H1 (cell line): ENCODE measurements at regions of chr9 and their contacts with region 1.

Region 1: GRCh38 chr9:94097788-94098414 is 13.6 kb downstream of the PTPDC1 start:
- DNase-seq: no peak
- H3K4me3 ChIP-seq: no peak overlapping the region
- H3K27ac ChIP-seq: no peak overlapping the region
- H3K4me1 ChIP-seq: peaks cover 0 to 5% (median under 1%) of the 10 kb centered on the region in 4 experiments; a peak in 2 of 7 replicates
- H3K27me3 ChIP-seq: no peaks in the 10 kb centered on the region
- CTCF ChIP-seq: no peak
- EP300 ChIP-seq: no peak
- POLR2A ChIP-seq: no peak
- RAD21 ChIP-seq: no peak

Region 2: DNA sequence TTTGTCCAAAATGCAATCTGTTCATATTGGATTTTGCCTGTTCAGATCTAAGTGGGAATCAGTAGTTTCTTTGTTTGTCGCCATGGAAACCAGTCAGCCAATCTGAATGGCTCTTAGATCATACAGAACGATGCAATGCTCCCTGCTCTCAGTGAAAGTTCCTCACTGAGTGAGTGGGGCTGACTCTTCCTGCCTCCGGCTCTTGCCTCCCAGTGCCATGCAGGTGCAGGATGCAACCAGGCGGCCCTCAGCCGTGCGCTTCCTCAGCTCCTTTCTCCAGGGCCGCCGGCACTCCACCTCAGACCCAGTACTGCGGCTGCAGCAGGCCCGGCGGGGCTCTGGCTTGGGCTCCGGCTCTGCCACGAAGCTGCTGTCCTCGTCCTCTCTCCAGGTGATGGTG is 13.6 kb before region 1 on chr9 and contains the start of gene PTPDC1:
- CTCF ChIA-PET with region 1: interaction called, 7 read pairs
- POLR2A ChIA-PET with region 1: interaction called, 16 read pairs
- DNase-seq: peak; percentile 47 to 77
- H3K4me3 ChIP-seq: peak within 1 kb of the TSS in 1 of 4 experiments; percentile 48; a peak in 2 of 8 replicates
- H3K27ac ChIP-seq: no peak within 1 kb of the TSS
- H3K4me1 ChIP-seq: peaks cover 0 to 5% (median 1%) of the 10 kb centered on the region in 4 experiments; a peak in 2 of 7 replicates
- H3K27me3 ChIP-seq: no peaks in the 10 kb centered on the region
- CTCF ChIP-seq: no peak
- EP300 ChIP-seq: no peak
- POLR2A ChIP-seq: peak in 1 of 2 experiments; percentile 63; a peak in 1 of 3 replicates
- RAD21 ChIP-seq: no peak; a peak in 1 of 4 replicates
- total RNA-seq, gene PTPDC1: 6.9 and 7.3 TPM in 2 replicates

Region 3: GRCh38 chr9:94110821-94111252 is 12.9 kb after region 1 on chr9:
- CTCF ChIA-PET with region 1: no interaction called
- POLR2A ChIA-PET with region 1: interaction called, 14 read pairs
- DNase-seq: no peak
- H3K4me3 ChIP-seq: no peak overlapping the region
- H3K27ac ChIP-seq: no peak overlapping the region
- H3K4me1 ChIP-seq: 0 out of 7 replicates have a peak, but pooled peaks cover 0 to 2% (median 0%) of the 10 kb centered on the region in 4 experiments
- H3K27me3 ChIP-seq: no peaks in the 10 kb centered on the region; a peak in 1 of 7 replicates
- CTCF ChIP-seq: no peak
- EP300 ChIP-seq: no peak
- POLR2A ChIP-seq: no peak
- RAD21 ChIP-seq: no peak

Region 4: GRCh38 chr9:94120854-94121376 is 23.0 kb after region 1 on chr9:
- CTCF ChIA-PET with region 1: no interaction called
- POLR2A ChIA-PET with region 1: no interaction called
- DNase-seq: no peak
- H3K4me3 ChIP-seq: no peak overlapping the region
- H3K27ac ChIP-seq: no peak overlapping the region
- H3K4me1 ChIP-seq: 0 out of 7 replicates have a peak, but pooled peaks cover 0 to 2% (median 0%) of the 10 kb centered on the region in 4 experiments
- H3K27me3 ChIP-seq: no peaks in the 10 kb centered on the region
- CTCF ChIP-seq: no peak
- EP300 ChIP-seq: no peak
- POLR2A ChIP-seq: no peak
- RAD21 ChIP-seq: no peak